ENCODE measurements at regions of chr9 and their contacts with region 1.

Region 1: GRCh38 chr9:131733541-131734061 is 6.3 kb downstream of the RAPGEF1 start:
- DNase-seq: peak in 2 of 5 donors; percentile 52 to 84
- H3K4me3 ChIP-seq: peak overlapping the region; percentile 20 to 34
- H3K4me3 Mint-ChIP-seq: peak overlapping the region; percentile 63 to 88 (median 82)
- H3K27ac ChIP-seq: peak overlapping the region; percentile 84
- H3K27ac Mint-ChIP-seq: peak overlapping the region; percentile 89 to 98 (median 96)
- H3K4me1 ChIP-seq: peaks cover 96% of the 10 kb centered on the region
- H3K4me1 Mint-ChIP-seq: peaks cover 70 to 93% (median 83%) of the 10 kb centered on the region in 4 donors
- H3K27me3 ChIP-seq: no peaks in the 10 kb centered on the region
- H3K27me3 Mint-ChIP-seq: no peaks in the 10 kb centered on the region

Region 2: GRCh38 chr9:131585375-131585774 is 148.2 kb before region 1 on chr9:
- CTCF ChIA-PET with region 1: interaction called, 186 read pairs
- POLR2A ChIA-PET with region 1: interaction called, 26 read pairs
- intact Hi-C with region 1: no loop called
- DNase-seq: peak; percentile 56 to 77 (median 60)
- H3K4me3 ChIP-seq: no peak overlapping the region
- H3K4me3 Mint-ChIP-seq: peak overlapping the region; percentile 67 to 87 (median 78)
- H3K27ac ChIP-seq: peak overlapping the region; percentile 6
- H3K27ac Mint-ChIP-seq: peak overlapping the region; percentile 85 to 97 (median 92)
- H3K4me1 ChIP-seq: peaks cover 35% of the 10 kb centered on the region
- H3K4me1 Mint-ChIP-seq: peaks cover 24 to 57% (median 32%) of the 10 kb centered on the region in 4 donors
- H3K27me3 ChIP-seq: no peaks in the 10 kb centered on the region
- H3K27me3 Mint-ChIP-seq: no peaks in the 10 kb centered on the region

Region 3: GRCh38 chr9:131635285-131635684 is 98.3 kb before region 1 on chr9:
- CTCF ChIA-PET with region 1: interaction called, 16 read pairs
- POLR2A ChIA-PET with region 1: interaction called, 16 read pairs
- intact Hi-C with region 1: loop called (anchors 1 kb)
- DNase-seq: peak; percentile 74 to 94 (median 80)
- H3K4me3 ChIP-seq: no peak overlapping the region
- H3K4me3 Mint-ChIP-seq: peak overlapping the region in 5 of 8 donors; percentile 13 to 60 (median 26)
- H3K27ac ChIP-seq: peak overlapping the region; percentile 67
- H3K27ac Mint-ChIP-seq: peak overlapping the region; percentile 92 to 97 (median 96)
- H3K4me1 ChIP-seq: peaks cover 20% of the 10 kb centered on the region
- H3K4me1 Mint-ChIP-seq: peaks cover 23 to 50% (median 38%) of the 10 kb centered on the region in 4 donors
- H3K27me3 ChIP-seq: no peaks in the 10 kb centered on the region
- H3K27me3 Mint-ChIP-seq: no peaks in the 10 kb centered on the region

Region 4: DNA sequence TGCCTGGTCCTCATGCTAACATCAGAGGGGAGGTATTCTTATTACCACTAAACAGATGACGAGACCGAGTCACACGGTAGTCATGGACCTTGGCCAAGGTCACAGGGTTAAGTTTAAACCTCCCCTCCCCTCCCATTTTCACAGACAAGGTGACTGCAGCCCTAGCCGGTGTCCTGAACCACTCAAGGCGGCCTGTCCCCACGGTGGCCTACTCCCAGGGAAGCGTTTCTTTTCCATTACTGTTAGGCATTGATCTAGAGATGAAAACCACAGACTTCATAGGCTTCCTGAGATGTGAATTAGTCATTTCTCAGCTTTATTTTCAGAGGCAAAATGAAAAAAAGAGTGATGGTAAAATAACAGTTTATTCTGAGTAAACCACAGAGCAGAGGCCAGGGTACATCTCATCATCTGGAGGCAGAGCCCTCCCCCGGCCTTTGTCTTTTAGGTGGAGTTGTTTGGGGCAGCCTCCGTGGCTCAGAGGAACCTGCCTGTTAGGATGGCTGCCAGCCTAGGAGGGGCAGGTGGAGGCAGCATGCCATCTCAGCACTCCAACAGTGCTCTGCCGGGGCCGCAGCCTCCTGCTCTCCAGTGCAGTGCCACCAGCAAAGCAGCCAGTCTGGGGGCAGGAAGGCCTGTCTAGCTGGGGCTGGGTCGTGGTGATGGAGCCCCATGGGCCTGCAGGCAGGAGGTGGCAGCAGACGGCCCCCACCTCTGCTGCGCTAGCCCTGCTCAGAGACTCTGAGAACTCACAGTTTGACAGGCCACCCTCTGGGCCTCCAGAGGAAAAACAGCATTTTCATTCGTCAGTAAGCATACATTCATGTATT is 64.9 kb before region 1 on chr9:
- CTCF ChIA-PET with region 1: interaction called, 80 read pairs
- POLR2A ChIA-PET with region 1: interaction called, 692 read pairs
- intact Hi-C with region 1: loop called (anchors 2 kb)
- DNase-seq: peak; percentile 74 to 94 (median 77)
- H3K4me3 ChIP-seq: peak overlapping the region in 1 of 2 donors; percentile 46
- H3K4me3 Mint-ChIP-seq: peak overlapping the region; percentile 73 to 85 (median 80)
- H3K27ac ChIP-seq: peak overlapping the region; percentile 89
- H3K27ac Mint-ChIP-seq: peak overlapping the region; percentile 94 to 100 (median 100)
- H3K4me1 ChIP-seq: peaks cover 97% of the 10 kb centered on the region
- H3K4me1 Mint-ChIP-seq: peaks cover 71 to 100% (median 91%) of the 10 kb centered on the region in 4 donors
- H3K27me3 ChIP-seq: no peaks in the 10 kb centered on the region
- H3K27me3 Mint-ChIP-seq: no peaks in the 10 kb centered on the region

Region 5: DNA sequence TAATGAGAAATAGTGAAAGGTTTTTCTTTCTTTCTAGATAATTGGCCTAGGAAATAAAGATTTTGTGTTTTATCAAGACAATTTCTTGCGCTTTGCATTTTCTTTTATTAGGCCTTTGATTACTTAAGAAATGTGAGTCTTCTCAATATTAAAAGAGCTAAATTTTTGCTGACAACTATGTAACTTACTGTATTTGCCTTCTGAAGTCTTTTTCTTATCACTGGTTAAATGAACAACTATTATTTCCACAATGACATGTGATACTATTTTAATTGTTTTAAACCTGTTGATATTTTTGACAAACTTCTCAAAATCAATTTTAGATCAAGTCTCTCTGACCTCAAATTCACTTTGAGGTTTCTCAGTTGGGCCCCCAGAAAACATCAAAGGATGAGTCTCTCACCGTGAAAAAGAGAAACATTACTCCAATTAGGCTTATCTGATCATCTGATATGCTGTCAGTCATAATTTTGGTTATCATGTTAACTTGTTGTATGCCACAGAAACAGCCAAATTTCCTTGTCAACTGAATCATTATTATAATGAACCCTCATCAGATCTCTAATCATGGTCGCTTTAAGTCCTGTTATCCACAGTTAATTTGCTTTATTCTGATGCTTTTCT is 42.5 kb before region 1 on chr9:
- CTCF ChIA-PET with region 1: interaction called, 7 read pairs
- POLR2A ChIA-PET with region 1: interaction called, 18 read pairs
- intact Hi-C with region 1: loop called (anchors 2 kb)
- DNase-seq: peak; percentile 50 to 68 (median 55)
- H3K4me3 ChIP-seq: no peak overlapping the region
- H3K4me3 Mint-ChIP-seq: peak overlapping the region; percentile 41 to 76 (median 62)
- H3K27ac ChIP-seq: peak overlapping the region; percentile 23
- H3K27ac Mint-ChIP-seq: peak overlapping the region; percentile 30 to 94 (median 86)
- H3K4me1 ChIP-seq: peaks cover 91% of the 10 kb centered on the region
- H3K4me1 Mint-ChIP-seq: peaks cover 71 to 97% (median 88%) of the 10 kb centered on the region in 4 donors
- H3K27me3 ChIP-seq: no peaks in the 10 kb centered on the region
- H3K27me3 Mint-ChIP-seq: no peaks in the 10 kb centered on the region

Region 6: DNA sequence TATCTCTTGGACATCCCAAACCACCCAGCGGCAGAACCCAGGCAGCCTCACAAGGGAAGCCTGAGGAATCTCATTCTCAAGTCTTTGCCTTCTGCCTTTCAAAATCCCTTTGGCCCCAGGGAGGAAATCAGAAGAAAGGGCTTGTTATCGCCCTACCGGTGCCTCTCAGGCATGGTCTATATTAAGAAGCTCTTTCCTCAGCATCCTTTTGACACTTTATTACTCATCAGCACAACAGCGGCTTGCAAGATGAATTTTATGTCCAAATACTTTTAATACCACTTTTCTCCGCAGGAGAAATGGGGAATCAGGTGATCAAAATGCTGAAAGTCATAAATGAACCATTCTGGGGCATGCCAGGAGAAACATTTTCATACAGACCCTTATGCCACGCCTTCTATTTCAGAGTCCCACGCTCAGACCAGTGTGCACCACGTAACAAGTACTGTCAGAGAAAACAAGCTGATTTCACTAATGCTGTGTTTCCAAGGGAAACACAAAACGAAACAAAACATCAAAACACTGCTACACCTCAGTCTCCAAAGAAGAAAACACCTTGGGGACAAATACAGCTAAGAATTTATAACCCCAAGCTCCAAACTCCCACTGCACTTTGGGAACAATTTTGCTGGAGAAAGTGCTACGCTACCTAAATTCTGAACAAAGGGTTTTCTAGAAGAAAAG is 23.7 kb before region 1 on chr9:
- CTCF ChIA-PET with region 1: interaction called, 8 read pairs
- POLR2A ChIA-PET with region 1: interaction called, 60 read pairs
- intact Hi-C with region 1: loop called (anchors 2 kb)
- DNase-seq: peak; percentile 77 to 92 (median 84)
- H3K4me3 ChIP-seq: peak overlapping the region in 1 of 2 donors; percentile 8
- H3K4me3 Mint-ChIP-seq: peak overlapping the region; percentile 73 to 82 (median 78)
- H3K27ac ChIP-seq: peak overlapping the region; percentile 81
- H3K27ac Mint-ChIP-seq: peak overlapping the region; percentile 97 to 100 (median 99)
- H3K4me1 ChIP-seq: peaks cover 84% of the 10 kb centered on the region
- H3K4me1 Mint-ChIP-seq: peaks cover 53 to 94% (median 77%) of the 10 kb centered on the region in 4 donors
- H3K27me3 ChIP-seq: no peaks in the 10 kb centered on the region
- H3K27me3 Mint-ChIP-seq: no peaks in the 10 kb centered on the region

Region 7: GRCh38 chr9:131747356-131747755 is 13.8 kb after region 1 on chr9:
- CTCF ChIA-PET with region 1: interaction called, 21 read pairs
- POLR2A ChIA-PET with region 1: interaction called, 23 read pairs
- intact Hi-C with region 1: no loop called
- DNase-seq: peak in 4 of 5 donors; percentile 52 to 57 (median 56)
- H3K4me3 ChIP-seq: no peak overlapping the region
- H3K4me3 Mint-ChIP-seq: no peak overlapping the region
- H3K27ac ChIP-seq: no peak overlapping the region
- H3K27ac Mint-ChIP-seq: peak overlapping the region in 5 of 7 donors; percentile 7 to 65 (median 46)
- H3K4me1 ChIP-seq: peaks cover 29% of the 10 kb centered on the region
- H3K4me1 Mint-ChIP-seq: peaks cover 27 to 36% (median 29%) of the 10 kb centered on the region in 4 donors
- H3K27me3 ChIP-seq: no peaks in the 10 kb centered on the region
- H3K27me3 Mint-ChIP-seq: no peaks in the 10 kb centered on the region

Region 8: GRCh38 chr9:131809941-131810344 is 76.3 kb after region 1 on chr9:
- CTCF ChIA-PET with region 1: no interaction called
- POLR2A ChIA-PET with region 1: no interaction called
- intact Hi-C with region 1: no loop called
- DNase-seq: no peak
- H3K4me3 ChIP-seq: no peak overlapping the region
- H3K4me3 Mint-ChIP-seq: no peak overlapping the region
- H3K27ac ChIP-seq: no peak overlapping the region
- H3K27ac Mint-ChIP-seq: no peak overlapping the region
- H3K4me1 ChIP-seq: no peaks in the 10 kb centered on the region
- H3K4me1 Mint-ChIP-seq: no peaks in the 10 kb centered on the region
- H3K27me3 ChIP-seq: no peaks in the 10 kb centered on the region
- H3K27me3 Mint-ChIP-seq: peaks cover 17 to 26% of the 10 kb centered on the region in 2 donors

Region 9: GRCh38 chr9:131889437-131890251 is 156.0 kb after region 1 on chr9:
- CTCF ChIA-PET with region 1: no interaction called
- POLR2A ChIA-PET with region 1: no interaction called
- intact Hi-C with region 1: no loop called
- DNase-seq: no peak
- H3K4me3 ChIP-seq: no peak overlapping the region
- H3K4me3 Mint-ChIP-seq: no peak overlapping the region
- H3K27ac ChIP-seq: no peak overlapping the region
- H3K27ac Mint-ChIP-seq: peak overlapping the region in 1 of 7 donors; percentile 10
- H3K4me1 ChIP-seq: no peaks in the 10 kb centered on the region
- H3K4me1 Mint-ChIP-seq: peaks cover 0 to 1% (median 0%) of the 10 kb centered on the region in 4 donors
- H3K27me3 ChIP-seq: no peaks in the 10 kb centered on the region
- H3K27me3 Mint-ChIP-seq: no peaks in the 10 kb centered on the region